ENCODE measurements at regions of chr14 and their contacts with region 1.

Region 1: DNA sequence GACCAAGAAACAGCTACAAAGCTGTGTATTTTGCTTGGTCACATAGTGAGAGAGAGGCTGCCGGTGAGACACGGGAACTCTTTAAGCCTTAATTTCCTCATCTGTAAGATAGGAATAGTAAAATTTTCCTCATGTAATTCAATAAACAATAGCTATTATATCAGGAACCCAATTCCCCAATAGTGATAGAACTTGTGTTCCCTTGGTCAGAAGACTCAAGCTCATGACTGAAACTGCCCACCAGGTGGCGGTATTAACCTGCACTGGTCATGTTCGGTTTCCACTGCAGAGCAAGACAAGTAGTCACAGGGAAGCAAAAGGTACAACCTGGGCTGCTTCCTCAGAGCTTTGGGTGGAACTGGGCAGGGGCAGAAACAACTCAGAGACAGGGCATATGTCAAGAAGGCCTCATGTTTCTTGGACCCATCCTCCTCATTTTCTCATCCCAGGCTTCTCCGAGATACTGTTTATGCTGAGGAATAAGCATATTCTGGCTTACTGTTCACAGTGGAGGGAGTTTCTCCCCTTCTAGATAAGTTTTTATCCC is 4.2 kb upstream of the AJUBA start:
- ATAC-seq: peak; percentile 22 to 59 (median 46)
- H3K4me3 ChIP-seq: peak overlapping the region in 1 of 5 donors; percentile 6
- H3K27ac ChIP-seq: no peak overlapping the region
- H3K4me1 ChIP-seq: peaks cover 0 to 5% of the 10 kb centered on the region in 2 donors

Region 2: GRCh38 chr14:22791301-22791700 is 195.3 kb before region 1 on chr14:
- in situ Hi-C with region 1: no loop called
- ATAC-seq: peak; percentile 24 to 100 (median 94)
- H3K4me3 ChIP-seq: no peak overlapping the region
- H3K27ac ChIP-seq: no peak overlapping the region
- H3K4me1 ChIP-seq: no peaks in the 10 kb centered on the region

Region 3: DNA sequence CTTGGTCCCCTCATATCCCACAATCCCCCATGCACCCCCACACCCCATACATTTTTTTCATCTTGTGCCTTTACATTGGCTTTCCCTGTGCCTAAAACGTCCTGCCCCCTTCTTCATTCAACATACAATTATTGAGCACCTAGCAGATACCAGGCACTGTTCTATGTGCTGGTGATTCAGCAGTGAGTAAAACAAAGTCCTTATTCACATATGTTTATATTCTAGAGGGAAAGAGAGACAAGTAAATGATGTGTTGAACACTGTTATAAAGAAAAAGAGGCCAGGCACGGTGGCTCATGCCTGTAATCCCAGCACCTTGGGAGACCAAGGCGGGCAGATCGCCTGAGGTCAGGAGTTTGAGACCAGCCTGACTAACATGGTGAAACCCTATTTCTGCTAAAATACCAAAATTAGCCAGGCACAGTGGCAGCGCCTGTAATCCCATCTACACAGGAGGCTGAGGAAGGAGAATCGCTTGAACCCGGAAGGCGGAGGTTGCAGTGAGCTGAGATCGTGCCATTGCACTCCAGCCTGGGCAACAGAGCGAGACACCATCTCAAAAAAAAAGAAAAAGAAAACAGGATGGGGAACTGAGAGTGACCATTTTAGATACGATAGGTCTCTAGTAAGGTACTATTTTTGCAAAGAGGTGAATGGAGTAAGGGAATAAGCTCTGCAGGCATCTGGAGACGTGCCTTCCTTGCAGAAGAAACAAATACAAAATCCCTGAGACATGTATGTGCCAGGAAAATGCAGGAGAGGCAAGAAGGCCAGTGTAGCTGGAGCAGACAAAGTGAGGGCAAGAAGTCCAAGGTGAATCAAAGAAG is 183.5 kb before region 1 on chr14:
- in situ Hi-C with region 1: no loop called
- ATAC-seq: no peak
- H3K4me3 ChIP-seq: no peak overlapping the region
- H3K27ac ChIP-seq: no peak overlapping the region
- H3K4me1 ChIP-seq: no peaks in the 10 kb centered on the region

Region 4: GRCh38 chr14:22872033-22872832 is 114.3 kb before region 1 on chr14:
- in situ Hi-C with region 1: no loop called
- ATAC-seq: peak; percentile 30 to 54 (median 50)
- H3K4me3 ChIP-seq: peak overlapping the region; percentile 31 to 88 (median 54)
- H3K27ac ChIP-seq: peak overlapping the region; percentile 13 to 16
- H3K4me1 ChIP-seq: peaks cover 0 to 5% of the 10 kb centered on the region in 2 donors

Region 5: GRCh38 chr14:23068476-23069412 is 82.2 kb after region 1 on chr14:
- in situ Hi-C with region 1: loop called in 2 of 9 experiments (anchors 10 kb)
- ATAC-seq: peak; percentile 47 to 71 (median 60)
- H3K4me3 ChIP-seq: peak overlapping the region in 2 of 5 donors; percentile 2 to 13
- H3K27ac ChIP-seq: no peak overlapping the region
- H3K4me1 ChIP-seq: peaks cover 27 to 31% of the 10 kb centered on the region in 2 donors